ENCODE measurements at regions of chr11 and their contacts with region 1.

Region 1: GRCh38 chr11:85664615-85665481 is at the start of gene CREBZF:
- DNase-seq: peak; percentile 95 to 96
- ATAC-seq: peak; percentile 72 to 86 (median 79)
- H3K4me3 ChIP-seq: peak within 1 kb of the TSS; percentile 94
- H3K4me3 Mint-ChIP-seq: peak within 1 kb of the TSS; percentile 98
- H3K27ac ChIP-seq: peak within 1 kb of the TSS; percentile 100
- H3K27ac Mint-ChIP-seq: peak within 1 kb of the TSS; percentile 98
- H3K4me1 ChIP-seq: peaks cover 11% of the 10 kb centered on the region
- H3K4me1 Mint-ChIP-seq: peaks cover 50 to 55% of the 10 kb centered on the region in 2 donors
- H3K27me3 ChIP-seq: no peaks in the 10 kb centered on the region
- H3K27me3 Mint-ChIP-seq: no peaks in the 10 kb centered on the region
- CTCF ChIP-seq: no peak
- total RNA-seq, gene CREBZF: 60.1 to 92.7 (median 82.0) TPM

Region 2: DNA sequence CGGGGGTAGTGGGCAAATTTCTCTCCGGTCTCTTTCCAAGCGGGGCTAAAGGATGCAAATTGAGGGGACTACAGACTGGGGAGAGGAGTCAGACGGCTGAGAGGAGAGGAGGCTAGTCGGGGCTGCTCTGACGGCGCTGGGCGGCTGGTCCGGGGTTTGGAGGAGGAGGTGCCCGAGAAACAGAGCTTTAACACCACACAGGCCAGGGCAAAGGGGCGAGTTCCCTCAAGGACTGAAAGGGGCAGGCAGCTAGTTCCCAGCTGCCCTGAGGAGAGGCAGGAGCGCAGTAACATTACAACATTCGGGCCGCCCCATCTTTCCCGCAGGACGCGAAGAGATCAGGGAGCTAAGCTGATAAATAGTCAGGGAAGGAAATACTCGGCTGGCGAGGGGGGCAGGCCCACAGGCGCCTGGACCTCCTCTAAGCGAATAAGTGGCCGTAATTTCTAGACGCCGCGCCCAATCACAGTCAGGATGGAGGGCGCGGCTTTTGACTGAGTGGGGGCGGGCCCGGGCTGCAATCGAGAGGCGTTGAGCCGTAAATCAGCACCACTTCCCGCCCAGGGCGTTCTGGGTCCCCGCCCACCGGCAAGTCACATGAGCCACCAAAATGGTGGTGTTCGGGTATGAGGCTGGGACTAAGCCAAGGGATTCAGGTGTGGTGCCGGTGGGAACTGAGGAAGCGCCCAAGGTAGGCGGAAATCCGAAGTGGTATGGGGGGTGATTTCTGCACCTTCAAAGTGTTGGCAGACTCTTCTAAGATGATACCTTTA is 36.7 kb before region 1 on chr11 and contains the start of gene TMEM126B:
- intact Hi-C with region 1: loop called (anchors 1 kb)
- DNase-seq: peak; percentile 94 to 96
- ATAC-seq: peak; percentile 96 to 100 (median 97)
- H3K4me3 ChIP-seq: peak within 1 kb of the TSS; percentile 69
- H3K4me3 Mint-ChIP-seq: peak within 1 kb of the TSS; percentile 98
- H3K27ac ChIP-seq: peak within 1 kb of the TSS; percentile 78
- H3K27ac Mint-ChIP-seq: peak within 1 kb of the TSS; percentile 95 to 100
- H3K4me1 ChIP-seq: peaks cover 6% of the 10 kb centered on the region
- H3K4me1 Mint-ChIP-seq: peaks cover 27 to 29% of the 10 kb centered on the region in 2 donors
- H3K27me3 ChIP-seq: no peaks in the 10 kb centered on the region
- H3K27me3 Mint-ChIP-seq: peaks cover 0 to 14% of the 10 kb centered on the region in 2 donors
- CTCF ChIP-seq: no peak
- total RNA-seq, gene TMEM126B: 29.4 to 38.6 (median 31.2) TPM

Region 3: GRCh38 chr11:85647604-85648299 is 17.1 kb before region 1 on chr11 and contains the start of gene TMEM126A:
- intact Hi-C with region 1: loop called (anchors 1 kb)
- DNase-seq: peak; percentile 86 to 94
- ATAC-seq: peak; percentile 99 to 100 (median 99)
- H3K4me3 ChIP-seq: peak within 1 kb of the TSS; percentile 79
- H3K4me3 Mint-ChIP-seq: peak within 1 kb of the TSS; percentile 100
- H3K27ac ChIP-seq: peak within 1 kb of the TSS; percentile 68
- H3K27ac Mint-ChIP-seq: peak within 1 kb of the TSS; percentile 94 to 98
- H3K4me1 ChIP-seq: peaks cover 8% of the 10 kb centered on the region
- H3K4me1 Mint-ChIP-seq: peaks cover 27 to 28% of the 10 kb centered on the region in 2 donors
- H3K27me3 ChIP-seq: peaks cover 10% of the 10 kb centered on the region
- H3K27me3 Mint-ChIP-seq: peaks cover 25 to 31% of the 10 kb centered on the region in 2 donors
- CTCF ChIP-seq: no peak
- total RNA-seq, gene TMEM126A: 16.8 to 27.6 (median 23.2) TPM

Region 4: GRCh38 chr11:86068951-86069407 is 404.1 kb after region 1 on chr11 and contains the start of gene PICALM:
- intact Hi-C with region 1: loop called (anchors 5 kb)
- DNase-seq: peak; percentile 90 to 99
- ATAC-seq: peak; percentile 71 to 92 (median 81)
- H3K4me3 ChIP-seq: peak within 1 kb of the TSS; percentile 76
- H3K4me3 Mint-ChIP-seq: peak within 1 kb of the TSS; percentile 100
- H3K27ac ChIP-seq: peak within 1 kb of the TSS; percentile 91
- H3K27ac Mint-ChIP-seq: peak within 1 kb of the TSS; percentile 97 to 100
- H3K4me1 ChIP-seq: peaks cover 20% of the 10 kb centered on the region
- H3K4me1 Mint-ChIP-seq: peaks cover 47 to 49% of the 10 kb centered on the region in 2 donors
- H3K27me3 ChIP-seq: no peaks in the 10 kb centered on the region
- H3K27me3 Mint-ChIP-seq: no peaks in the 10 kb centered on the region
- CTCF ChIP-seq: no peak
- total RNA-seq, gene PICALM: 262 to 291 (median 285) TPM

Region 5: GRCh38 chr11:86244522-86245368 is 579.9 kb after region 1 on chr11 and contains the start of gene EED:
- intact Hi-C with region 1: loop called (anchors 1 kb)
- DNase-seq: peak; percentile 91 to 96
- ATAC-seq: peak; percentile 89 to 96 (median 89)
- H3K4me3 ChIP-seq: peak within 1 kb of the TSS; percentile 82
- H3K4me3 Mint-ChIP-seq: no peak within 1 kb of the TSS
- H3K27ac ChIP-seq: peak within 1 kb of the TSS; percentile 98
- H3K27ac Mint-ChIP-seq: no peak within 1 kb of the TSS
- H3K4me1 ChIP-seq: peaks cover 11% of the 10 kb centered on the region
- H3K4me1 Mint-ChIP-seq: peaks cover 0 to 20% of the 10 kb centered on the region in 2 donors
- H3K27me3 ChIP-seq: no peaks in the 10 kb centered on the region
- H3K27me3 Mint-ChIP-seq: peaks cover 0 to 11% of the 10 kb centered on the region in 2 donors
- CTCF ChIP-seq: no peak
- total RNA-seq, gene EED: 26.0 to 36.9 (median 34.0) TPM

Measured in natural killer cell (primary cell).